B cell (primary cell): ENCODE measurements at regions of chr7 and their contacts with region 1.

Region 1: DNA sequence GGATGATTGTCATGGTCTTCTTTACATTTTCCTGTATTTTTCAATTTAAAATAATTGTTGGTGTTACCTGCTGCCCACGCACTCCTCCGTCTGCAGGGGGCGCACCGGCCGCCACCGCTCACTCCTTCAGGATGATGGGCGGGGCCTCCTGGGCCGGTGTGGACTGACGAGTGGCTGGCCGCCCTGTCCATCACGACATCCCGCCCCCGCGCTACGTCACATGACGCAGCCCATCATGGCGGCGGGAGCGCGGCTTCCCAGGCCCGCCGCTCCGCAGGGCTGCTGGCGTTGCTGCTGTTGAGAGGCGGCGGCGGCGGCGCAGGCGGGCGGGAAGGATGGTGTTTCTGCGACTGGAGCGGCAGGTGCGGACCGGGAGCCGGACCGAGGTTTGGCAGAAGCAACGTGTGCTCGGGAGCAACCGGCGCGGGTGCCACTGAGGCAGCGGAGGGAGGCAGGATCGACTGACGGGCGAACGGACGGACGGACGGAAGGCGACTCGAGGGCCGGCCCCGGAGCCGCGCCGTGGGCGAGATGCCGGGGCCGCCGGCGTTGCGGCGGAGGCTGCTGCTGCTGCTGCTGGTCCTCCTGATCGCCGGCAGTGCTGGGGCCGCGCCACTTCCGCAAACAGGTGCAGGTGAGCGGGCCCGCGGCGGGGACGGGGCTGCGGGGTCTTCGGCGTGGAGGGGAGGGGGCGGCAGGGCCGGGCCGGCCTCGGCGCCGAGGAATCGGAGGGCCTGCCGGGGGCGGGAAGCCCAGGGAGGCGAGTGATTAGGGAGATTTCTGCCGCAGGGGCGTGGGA is at the start of gene LMTK2:
- DNase-seq: peak; percentile 97
- ATAC-seq: peak; percentile 100
- H3K4me3 ChIP-seq: peak within 1 kb of the TSS; percentile 74 to 91 (median 84)
- H3K4me3 Mint-ChIP-seq: peak within 1 kb of the TSS; percentile 98
- H3K27ac ChIP-seq: peak within 1 kb of the TSS; percentile 47 to 77
- H3K27ac Mint-ChIP-seq: peak within 1 kb of the TSS; percentile 92
- H3K4me1 ChIP-seq: peaks cover 10 to 14% of the 10 kb centered on the region in 2 donors
- H3K4me1 Mint-ChIP-seq: peaks cover 24% of the 10 kb centered on the region
- H3K27me3 ChIP-seq: peaks cover 0 to 24% (median 14%) of the 10 kb centered on the region in 4 experiments
- H3K27me3 Mint-ChIP-seq: peaks cover 10% of the 10 kb centered on the region
- CTCF ChIP-seq: peak; percentile 91
- total RNA-seq, gene LMTK2: 13.1 and 16.7 TPM in 2 replicates

Region 2: GRCh38 chr7:97117372-97118188 is 989.3 kb before region 1 on chr7 and contains the start of gene SDHAF3:
- CTCF ChIA-PET with region 1: no interaction called
- POLR2A ChIA-PET with region 1: no interaction called
- intact Hi-C with region 1: loop called (anchors 2 kb)
- DNase-seq: peak; percentile 98
- ATAC-seq: peak; percentile 85
- H3K4me3 ChIP-seq: peak within 1 kb of the TSS; percentile 71 to 99 (median 88)
- H3K4me3 Mint-ChIP-seq: peak within 1 kb of the TSS; percentile 92
- H3K27ac ChIP-seq: peak within 1 kb of the TSS; percentile 85 to 90
- H3K27ac Mint-ChIP-seq: peak within 1 kb of the TSS; percentile 96
- H3K4me1 ChIP-seq: peaks cover 24 to 25% of the 10 kb centered on the region in 2 donors
- H3K4me1 Mint-ChIP-seq: peaks cover 51% of the 10 kb centered on the region
- H3K27me3 ChIP-seq: no peaks in the 10 kb centered on the region
- H3K27me3 Mint-ChIP-seq: no peaks in the 10 kb centered on the region
- CTCF ChIP-seq: peak; percentile 23
- total RNA-seq, gene SDHAF3: 18.5 and 20.2 TPM in 2 replicates

Region 3: GRCh38 chr7:98021588-98022351 is 85.1 kb before region 1 on chr7:
- CTCF ChIA-PET with region 1: interaction called, 13 read pairs
- POLR2A ChIA-PET with region 1: no interaction called
- intact Hi-C with region 1: loop called (anchors 1 kb)
- DNase-seq: peak; percentile 81
- ATAC-seq: peak; percentile 75
- H3K4me3 ChIP-seq: no peak overlapping the region
- H3K4me3 Mint-ChIP-seq: no peak overlapping the region
- H3K27ac ChIP-seq: no peak overlapping the region
- H3K27ac Mint-ChIP-seq: peak overlapping the region; percentile 34
- H3K4me1 ChIP-seq: no peaks in the 10 kb centered on the region
- H3K4me1 Mint-ChIP-seq: peaks cover 4% of the 10 kb centered on the region
- H3K27me3 ChIP-seq: peaks cover 0 to 25% (median 1%) of the 10 kb centered on the region in 4 experiments
- H3K27me3 Mint-ChIP-seq: peaks cover 23% of the 10 kb centered on the region
- CTCF ChIP-seq: peak; percentile 90

Region 4: GRCh38 chr7:98202367-98203195 is 95.7 kb after region 1 on chr7:
- CTCF ChIA-PET with region 1: interaction called, 4 read pairs
- POLR2A ChIA-PET with region 1: no interaction called
- intact Hi-C with region 1: loop called (anchors 1 kb)
- DNase-seq: peak; percentile 91
- ATAC-seq: peak; percentile 90
- H3K4me3 ChIP-seq: peak overlapping the region in 4 of 5 experiments; percentile 9 to 55 (median 40)
- H3K4me3 Mint-ChIP-seq: peak overlapping the region; percentile 88
- H3K27ac ChIP-seq: peak overlapping the region in 1 of 2 donors; percentile 41
- H3K27ac Mint-ChIP-seq: peak overlapping the region; percentile 75
- H3K4me1 ChIP-seq: peaks cover 45 to 54% of the 10 kb centered on the region in 2 donors
- H3K4me1 Mint-ChIP-seq: peaks cover 53% of the 10 kb centered on the region
- H3K27me3 ChIP-seq: peaks cover 0 to 16% (median 6%) of the 10 kb centered on the region in 4 experiments
- H3K27me3 Mint-ChIP-seq: peaks cover 16% of the 10 kb centered on the region
- CTCF ChIP-seq: no peak

Region 5: GRCh38 chr7:98878365-98879165 is 771.7 kb after region 1 on chr7 and contains the start of gene TRRAP:
- CTCF ChIA-PET with region 1: no interaction called
- POLR2A ChIA-PET with region 1: no interaction called
- intact Hi-C with region 1: loop called (anchors 2 kb)
- DNase-seq: peak; percentile 91
- ATAC-seq: peak; percentile 75
- H3K4me3 ChIP-seq: peak within 1 kb of the TSS; percentile 12 to 100 (median 98)
- H3K4me3 Mint-ChIP-seq: peak within 1 kb of the TSS; percentile 92
- H3K27ac ChIP-seq: peak within 1 kb of the TSS; percentile 75 to 89
- H3K27ac Mint-ChIP-seq: peak within 1 kb of the TSS; percentile 90
- H3K4me1 ChIP-seq: peaks cover 11 to 16% of the 10 kb centered on the region in 2 donors
- H3K4me1 Mint-ChIP-seq: peaks cover 11% of the 10 kb centered on the region
- H3K27me3 ChIP-seq: peaks cover 0 to 6% (median 0%) of the 10 kb centered on the region in 4 experiments
- H3K27me3 Mint-ChIP-seq: no peaks in the 10 kb centered on the region
- CTCF ChIP-seq: peak; percentile 94
- total RNA-seq, gene TRRAP: 102 and 107 TPM in 2 replicates